ENCODE measurements at regions of chr12 and their contacts with region 1.

Region 1: GRCh38 chr12:6833189-6833890 is 5.1 kb downstream of the P3H3 start:
- DNase-seq: no peak
- ATAC-seq: no peak
- H3K4me3 Mint-ChIP-seq: no peak overlapping the region
- H3K27ac Mint-ChIP-seq: no peak overlapping the region
- H3K4me1 Mint-ChIP-seq: peaks cover 12% of the 10 kb centered on the region
- H3K27me3 Mint-ChIP-seq: peaks cover 28% of the 10 kb centered on the region

Region 2: GRCh38 chr12:6700646-6701051 is 132.7 kb before region 1 on chr12 and contains the start of gene PIANP:
- CTCF ChIA-PET with region 1: no interaction called
- POLR2A ChIA-PET with region 1: no interaction called
- DNase-seq: peak; percentile 38
- ATAC-seq: peak; percentile 79
- H3K4me3 Mint-ChIP-seq: peak within 1 kb of the TSS; percentile 51
- H3K27ac Mint-ChIP-seq: no peak within 1 kb of the TSS
- H3K4me1 Mint-ChIP-seq: peaks cover 18% of the 10 kb centered on the region
- H3K27me3 Mint-ChIP-seq: peaks cover 59% of the 10 kb centered on the region
- total RNA-seq, gene PIANP: not detected

Region 3: GRCh38 chr12:6771091-6771495 is 62.2 kb before region 1 on chr12:
- CTCF ChIA-PET with region 1: interaction called, 13 read pairs
- POLR2A ChIA-PET with region 1: interaction called, 3 read pairs
- DNase-seq: no peak
- ATAC-seq: no peak
- H3K4me3 Mint-ChIP-seq: no peak overlapping the region
- H3K27ac Mint-ChIP-seq: peak overlapping the region; percentile 80
- H3K4me1 Mint-ChIP-seq: peaks cover 78% of the 10 kb centered on the region
- H3K27me3 Mint-ChIP-seq: peaks cover 6% of the 10 kb centered on the region

Measured in activated CD8-positive, alpha-beta T cell treated with anti-CD3 and anti-CD28 coated beads, Interleukin-2, amount 10 ng/mL, durations not matched to agents 7 days and 5 days (primary cell).